ENCODE measurements at regions of chr7 and their contacts with region 1.

Region 1: GRCh38 chr7:129797214-129797789 is 155.5 kb downstream of the UBE2H start:
- DNase-seq: no peak

Region 2: GRCh38 chr7:129707910-129708499 is 89.3 kb before region 1 on chr7:
- in situ Hi-C with region 1: no loop called
- DNase-seq: no peak

Region 3: GRCh38 chr7:129751916-129752315 is 45.4 kb before region 1 on chr7:
- in situ Hi-C with region 1: loop called (anchors 5 kb)
- DNase-seq: no peak